HEK293T (cell line): ENCODE measurements at regions of chr17 and their contacts with region 1.

Region 1: DNA sequence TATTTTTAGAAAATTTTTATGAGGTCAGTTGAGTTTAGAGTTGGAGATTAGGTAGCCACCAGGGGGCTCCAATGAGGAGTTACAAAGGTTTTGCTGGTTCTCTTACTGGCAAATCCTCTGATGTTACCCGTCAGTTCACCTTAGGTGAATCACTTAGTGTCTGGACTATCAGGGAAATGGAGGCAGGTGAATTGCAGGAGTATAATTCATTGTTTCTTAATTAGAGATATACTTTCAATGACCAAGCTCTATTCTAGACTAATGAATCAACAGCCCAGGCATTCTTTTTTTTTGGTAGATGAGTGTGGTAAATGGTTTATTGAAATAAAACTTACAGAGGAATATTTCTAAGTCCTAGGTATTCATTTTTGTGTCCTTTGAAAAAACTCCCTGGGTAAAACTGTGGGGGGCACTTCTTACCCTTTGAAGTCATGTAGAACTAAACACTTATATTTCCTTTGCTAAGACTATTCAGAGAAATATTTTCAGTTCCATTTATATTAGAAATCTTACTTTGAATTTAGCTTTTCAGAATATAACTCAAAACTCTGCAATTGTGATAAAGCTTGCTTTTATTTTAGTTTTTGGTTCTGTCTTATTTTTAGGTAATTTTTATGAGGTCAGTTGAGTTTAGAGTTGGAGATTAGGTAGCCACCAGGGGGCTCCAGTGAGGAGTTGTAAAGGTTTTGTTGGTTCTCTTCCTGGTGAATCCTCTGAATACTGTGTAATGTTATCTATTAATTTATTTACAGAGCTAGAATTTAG is 17.7 kb downstream of the PSMD11 start:
- DNase-seq: peak; percentile 26

Region 2: GRCh38 chr17:32444308-32445073 is 17.5 kb before region 1 on chr17 and contains the start of gene PSMD11:
- CTCF ChIA-PET with region 1: interaction called, 18 read pairs
- POLR2A ChIA-PET with region 1: interaction called, 5 read pairs
- DNase-seq: peak; percentile 93